Natural killer cell (primary cell): ENCODE measurements at regions of chr5 and their contacts with region 1.

Region 1: GRCh38 chr5:171207256-171207847 is 101.7 kb upstream of the TLX3 start:
- DNase-seq: peak in 1 of 2 donors; percentile 54
- ATAC-seq: peak in 1 of 3 donors; percentile 49
- H3K4me3 ChIP-seq: no peak overlapping the region
- H3K4me3 Mint-ChIP-seq: no peak overlapping the region
- H3K27ac ChIP-seq: no peak overlapping the region
- H3K27ac Mint-ChIP-seq: no peak overlapping the region
- H3K4me1 ChIP-seq: no peaks in the 10 kb centered on the region
- H3K4me1 Mint-ChIP-seq: peaks cover 0 to 4% of the 10 kb centered on the region in 2 donors
- H3K27me3 ChIP-seq: peaks cover 3% of the 10 kb centered on the region
- H3K27me3 Mint-ChIP-seq: peaks cover 0 to 8% of the 10 kb centered on the region in 2 donors
- CTCF ChIP-seq: peak; percentile 82

Region 2: GRCh38 chr5:170190436-170191134 is 1016.8 kb before region 1 on chr5:
- intact Hi-C with region 1: no loop called
- DNase-seq: no peak
- ATAC-seq: no peak
- H3K4me3 ChIP-seq: no peak overlapping the region
- H3K4me3 Mint-ChIP-seq: no peak overlapping the region
- H3K27ac ChIP-seq: no peak overlapping the region
- H3K27ac Mint-ChIP-seq: no peak overlapping the region
- H3K4me1 ChIP-seq: no peaks in the 10 kb centered on the region
- H3K4me1 Mint-ChIP-seq: no peaks in the 10 kb centered on the region
- H3K27me3 ChIP-seq: no peaks in the 10 kb centered on the region
- H3K27me3 Mint-ChIP-seq: peaks cover 0 to 3% of the 10 kb centered on the region in 2 donors
- CTCF ChIP-seq: no peak

Region 3: GRCh38 chr5:171162602-171163001 is 44.8 kb before region 1 on chr5:
- intact Hi-C with region 1: no loop called
- DNase-seq: peak in 1 of 2 donors; percentile 2
- ATAC-seq: peak in 1 of 3 donors; percentile 41
- H3K4me3 ChIP-seq: no peak overlapping the region
- H3K4me3 Mint-ChIP-seq: no peak overlapping the region
- H3K27ac ChIP-seq: no peak overlapping the region
- H3K27ac Mint-ChIP-seq: no peak overlapping the region
- H3K4me1 ChIP-seq: no peaks in the 10 kb centered on the region
- H3K4me1 Mint-ChIP-seq: no peaks in the 10 kb centered on the region
- H3K27me3 ChIP-seq: no peaks in the 10 kb centered on the region
- H3K27me3 Mint-ChIP-seq: peaks cover 0 to 5% of the 10 kb centered on the region in 2 donors
- CTCF ChIP-seq: no peak

Region 4: DNA sequence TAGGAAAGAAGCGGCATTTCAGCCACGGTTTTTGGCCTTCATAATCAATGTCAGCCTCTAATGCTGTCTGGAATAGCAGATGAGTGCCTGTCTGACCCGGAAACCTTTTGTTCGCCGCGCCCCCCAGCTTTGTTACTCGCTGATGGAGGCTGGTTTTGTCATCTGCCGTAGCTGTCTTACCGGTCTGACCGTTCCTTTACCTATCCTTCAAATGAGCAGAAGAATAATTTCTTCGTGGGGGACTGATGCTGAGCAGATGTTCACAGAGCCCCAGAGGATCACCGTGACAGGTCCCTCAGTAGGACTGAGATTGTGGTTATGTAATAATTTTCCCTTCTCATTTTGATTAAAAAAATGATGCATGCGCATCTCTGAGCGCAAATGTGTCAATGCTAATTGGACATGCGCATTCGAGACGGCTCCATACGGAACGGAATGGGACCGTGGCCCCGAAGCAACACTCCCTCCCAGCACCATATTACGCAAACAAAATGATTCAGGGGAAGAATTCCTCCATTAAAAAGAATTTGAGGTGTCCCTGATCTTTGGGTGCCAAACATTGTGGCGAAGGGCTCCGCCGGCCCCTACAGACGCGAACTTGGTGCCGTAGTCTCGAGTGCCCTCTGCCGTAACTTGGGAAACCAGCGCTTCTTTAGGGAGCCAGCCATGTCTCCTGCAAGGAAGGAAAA is 129.3 kb after region 1 on chr5:
- intact Hi-C with region 1: loop called (anchors 1 kb)
- DNase-seq: peak in 1 of 2 donors; percentile 55
- ATAC-seq: peak in 2 of 3 donors; percentile 49 to 79
- H3K4me3 ChIP-seq: no peak overlapping the region
- H3K4me3 Mint-ChIP-seq: peak overlapping the region; percentile 60
- H3K27ac ChIP-seq: no peak overlapping the region
- H3K27ac Mint-ChIP-seq: no peak overlapping the region
- H3K4me1 ChIP-seq: peaks cover 9% of the 10 kb centered on the region
- H3K4me1 Mint-ChIP-seq: peaks cover 6 to 8% of the 10 kb centered on the region in 2 donors
- H3K27me3 ChIP-seq: peaks cover 6% of the 10 kb centered on the region
- H3K27me3 Mint-ChIP-seq: peaks cover 26 to 47% of the 10 kb centered on the region in 2 donors
- CTCF ChIP-seq: peak; percentile 30

Region 5: GRCh38 chr5:171342362-171343111 is 135.2 kb after region 1 on chr5:
- intact Hi-C with region 1: loop called (anchors 1 kb)
- DNase-seq: peak in 1 of 2 donors; percentile 64
- ATAC-seq: peak; percentile 64 to 78 (median 71)
- H3K4me3 ChIP-seq: no peak overlapping the region
- H3K4me3 Mint-ChIP-seq: no peak overlapping the region
- H3K27ac ChIP-seq: no peak overlapping the region
- H3K27ac Mint-ChIP-seq: no peak overlapping the region
- H3K4me1 ChIP-seq: no peaks in the 10 kb centered on the region
- H3K4me1 Mint-ChIP-seq: no peaks in the 10 kb centered on the region
- H3K27me3 ChIP-seq: peaks cover 1% of the 10 kb centered on the region
- H3K27me3 Mint-ChIP-seq: peaks cover 11 to 12% of the 10 kb centered on the region in 2 donors
- CTCF ChIP-seq: peak; percentile 67